ENCODE measurements at regions of chr12 and their contacts with region 1.

Region 1: GRCh38 chr12:23204933-23205778 is 580.2 kb downstream of the ETNK1 start:
- H3K4me3 Mint-ChIP-seq: no peak overlapping the region
- H3K27ac Mint-ChIP-seq: no peak overlapping the region
- H3K4me1 Mint-ChIP-seq: no peaks in the 10 kb centered on the region
- H3K27me3 Mint-ChIP-seq: no peaks in the 10 kb centered on the region

Region 2: GRCh38 chr12:22684140-22685118 is 520.7 kb before region 1 on chr12:
- intact Hi-C with region 1: loop called (anchors 10 kb)
- H3K4me3 Mint-ChIP-seq: no peak overlapping the region
- H3K27ac Mint-ChIP-seq: no peak overlapping the region
- H3K4me1 Mint-ChIP-seq: peaks cover 26% of the 10 kb centered on the region
- H3K27me3 Mint-ChIP-seq: no peaks in the 10 kb centered on the region

Region 3: GRCh38 chr12:23236066-23236780 is 31.1 kb after region 1 on chr12:
- intact Hi-C with region 1: no loop called
- H3K4me3 Mint-ChIP-seq: no peak overlapping the region
- H3K27ac Mint-ChIP-seq: no peak overlapping the region
- H3K4me1 Mint-ChIP-seq: no peaks in the 10 kb centered on the region
- H3K27me3 Mint-ChIP-seq: no peaks in the 10 kb centered on the region

Region 4: DNA sequence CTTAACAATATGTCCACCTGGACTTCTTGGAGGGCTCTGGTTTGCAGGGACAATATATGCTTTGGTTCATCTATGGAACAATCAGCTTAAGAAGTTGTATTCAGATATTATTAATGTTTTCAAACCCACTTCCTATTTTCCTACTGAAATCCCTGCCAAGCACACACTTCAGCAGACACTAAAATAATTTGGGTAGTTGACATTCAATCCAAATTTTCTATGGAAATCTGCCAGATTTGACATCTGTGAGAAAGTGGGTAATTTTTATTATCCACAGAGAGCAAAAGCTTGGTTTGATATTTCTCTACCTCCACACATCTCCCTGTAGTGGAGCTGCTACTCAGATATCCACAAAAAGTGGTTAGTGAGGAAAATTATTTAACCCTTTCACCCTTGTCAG is 1123.1 kb after region 1 on chr12:
- intact Hi-C with region 1: loop called (anchors 10 kb)
- H3K4me3 Mint-ChIP-seq: no peak overlapping the region
- H3K27ac Mint-ChIP-seq: no peak overlapping the region
- H3K4me1 Mint-ChIP-seq: no peaks in the 10 kb centered on the region
- H3K27me3 Mint-ChIP-seq: no peaks in the 10 kb centered on the region

Region 5: DNA sequence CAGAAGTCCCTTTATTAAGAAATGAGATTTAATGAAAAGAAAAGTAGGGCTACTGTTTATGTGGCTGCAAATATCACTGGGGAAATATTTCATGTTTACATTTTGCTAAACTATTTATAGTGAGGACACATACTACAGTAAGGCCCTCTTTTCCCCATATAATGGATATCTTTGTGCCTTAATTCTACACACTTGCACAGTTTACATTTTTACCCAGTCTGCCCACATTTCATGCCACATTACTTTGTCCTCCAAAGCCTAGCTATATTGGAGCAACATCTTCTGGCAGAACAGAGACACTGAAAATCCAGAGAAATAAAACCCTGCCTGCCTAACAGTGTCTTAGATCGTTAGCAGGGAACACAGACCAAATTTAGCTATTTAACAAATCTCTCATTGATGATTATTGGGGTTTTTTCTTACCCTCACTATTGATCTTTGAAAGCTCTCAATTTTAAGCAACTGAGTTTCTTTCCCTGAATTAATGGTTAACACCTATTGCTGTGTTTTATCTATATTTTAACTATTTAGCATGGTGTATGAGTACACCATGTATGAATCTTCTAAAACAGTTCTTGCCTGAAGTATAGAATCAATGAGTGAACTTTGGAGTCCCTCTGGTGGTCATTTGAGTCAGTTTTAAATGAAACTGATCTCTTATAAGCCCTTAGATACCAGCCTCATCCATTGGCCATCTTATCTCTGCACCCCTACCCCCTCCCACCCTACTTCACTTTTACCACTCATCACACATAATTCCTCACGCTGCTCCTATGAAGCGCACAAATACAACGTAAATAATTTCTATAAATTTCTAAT is 1573.5 kb after region 1 on chr12:
- intact Hi-C with region 1: loop called (anchors 2 kb)
- H3K4me3 Mint-ChIP-seq: no peak overlapping the region
- H3K27ac Mint-ChIP-seq: no peak overlapping the region
- H3K4me1 Mint-ChIP-seq: peaks cover 6% of the 10 kb centered on the region
- H3K27me3 Mint-ChIP-seq: no peaks in the 10 kb centered on the region

Region 6: DNA sequence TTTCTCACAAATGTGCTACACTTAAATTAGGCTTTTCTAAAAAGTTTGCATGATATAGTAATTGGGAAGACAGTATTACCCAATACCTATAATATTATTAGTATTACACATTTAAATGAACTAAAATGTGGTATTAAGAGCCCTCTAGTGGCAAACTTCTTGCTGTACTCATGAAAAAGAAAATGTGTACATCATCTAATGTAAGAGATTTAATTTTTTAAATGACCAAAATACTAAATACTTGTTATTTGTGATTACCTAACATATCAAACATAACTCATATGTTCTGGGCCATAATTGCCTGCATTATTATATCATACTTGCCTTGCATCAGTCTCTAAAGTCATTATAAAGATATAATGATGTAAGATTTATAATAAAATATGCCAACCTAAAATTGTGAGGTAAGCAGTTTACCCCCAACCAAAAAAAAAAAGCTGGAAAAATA is 1925.6 kb after region 1 on chr12:
- intact Hi-C with region 1: loop called (anchors 10 kb)
- H3K4me3 Mint-ChIP-seq: no peak overlapping the region
- H3K27ac Mint-ChIP-seq: no peak overlapping the region
- H3K4me1 Mint-ChIP-seq: peaks cover 10% of the 10 kb centered on the region
- H3K27me3 Mint-ChIP-seq: no peaks in the 10 kb centered on the region